GM18951 (cell line): ENCODE measurements at regions of chr5 and their contacts with region 1.

Region 1: GRCh38 chr5:54844905-54845566 is 140.4 kb downstream of the ESM1 start:
- POLR2A ChIP-seq: no peak

Region 2: GRCh38 chr5:54517174-54518092 is 327.6 kb before region 1 on chr5 and contains the start of gene SNX18:
- in situ Hi-C with region 1: loop called (anchors 10 kb)
- POLR2A ChIP-seq: peak; percentile 51

Region 3: GRCh38 chr5:54610197-54610944 is 234.7 kb before region 1 on chr5:
- in situ Hi-C with region 1: no loop called
- POLR2A ChIP-seq: no peak

Region 4: GRCh38 chr5:54663866-54664265 is 181.2 kb before region 1 on chr5:
- in situ Hi-C with region 1: no loop called
- POLR2A ChIP-seq: no peak

Region 5: GRCh38 chr5:54915466-54916027 is 70.5 kb after region 1 on chr5:
- in situ Hi-C with region 1: no loop called
- POLR2A ChIP-seq: no peak